Dendritic cell treated with granulocyte-macrophage colony-stimulating factor and Interleukin-4, amounts not matched to agents 40 ng/mL and 50 ng/mL, for 4 days (primary cell): ENCODE measurements at regions of chr16 and their contacts with region 1.

Region 1: GRCh38 chr16:89490387-89491237 is at the start of gene ANKRD11:
- H3K4me3 Mint-ChIP-seq: peak within 1 kb of the TSS; percentile 84
- H3K27ac Mint-ChIP-seq: peak within 1 kb of the TSS; percentile 91
- H3K4me1 Mint-ChIP-seq: peaks cover 77% of the 10 kb centered on the region
- H3K27me3 Mint-ChIP-seq: no peaks in the 10 kb centered on the region

Region 2: DNA sequence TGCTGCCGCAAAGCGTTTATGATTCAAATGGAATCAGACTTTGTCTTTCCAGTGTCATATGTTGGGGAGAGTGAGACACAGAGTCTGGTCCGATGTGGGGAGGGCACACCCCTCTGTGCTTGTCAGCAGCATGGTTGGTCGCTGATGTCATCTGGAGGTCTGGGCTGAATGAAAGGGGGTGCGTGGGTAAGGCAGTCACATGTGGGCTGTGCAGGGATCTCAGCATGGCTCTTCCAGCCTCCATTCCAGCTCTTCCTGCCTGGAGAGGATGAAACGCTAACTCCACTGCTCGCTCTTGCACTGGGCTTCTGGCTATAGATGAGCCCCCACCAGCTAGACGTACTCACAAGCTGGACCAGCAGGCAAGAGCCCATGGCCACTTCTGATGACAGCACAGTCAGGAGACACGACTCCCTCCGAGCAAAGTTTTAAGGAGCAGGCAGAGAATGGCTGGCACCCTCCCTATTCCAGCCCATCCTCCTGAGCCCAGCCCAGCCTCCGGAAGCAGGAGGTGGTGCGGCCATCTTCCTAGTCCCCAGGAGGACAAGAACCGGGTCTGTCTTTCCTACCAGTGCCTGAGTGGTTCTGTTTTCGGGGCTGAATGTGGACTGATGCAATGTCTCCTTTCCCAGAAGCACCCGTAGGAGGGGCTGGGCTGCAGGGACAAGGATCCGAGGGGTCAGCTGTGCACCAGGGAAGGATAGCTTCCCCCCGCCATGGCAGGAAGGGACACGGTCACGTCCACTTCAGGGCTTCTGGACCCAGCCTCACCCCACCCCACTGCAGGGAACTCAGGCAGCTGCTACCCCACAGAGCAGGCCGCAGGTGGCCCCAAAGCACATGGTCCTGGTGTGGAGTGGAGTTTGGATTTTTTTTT is 472.1 kb before region 1 on chr16:
- intact Hi-C with region 1: no loop called
- H3K4me3 Mint-ChIP-seq: no peak overlapping the region
- H3K27ac Mint-ChIP-seq: no peak overlapping the region
- H3K4me1 Mint-ChIP-seq: no peaks in the 10 kb centered on the region
- H3K27me3 Mint-ChIP-seq: peaks cover 47% of the 10 kb centered on the region

Region 3: DNA sequence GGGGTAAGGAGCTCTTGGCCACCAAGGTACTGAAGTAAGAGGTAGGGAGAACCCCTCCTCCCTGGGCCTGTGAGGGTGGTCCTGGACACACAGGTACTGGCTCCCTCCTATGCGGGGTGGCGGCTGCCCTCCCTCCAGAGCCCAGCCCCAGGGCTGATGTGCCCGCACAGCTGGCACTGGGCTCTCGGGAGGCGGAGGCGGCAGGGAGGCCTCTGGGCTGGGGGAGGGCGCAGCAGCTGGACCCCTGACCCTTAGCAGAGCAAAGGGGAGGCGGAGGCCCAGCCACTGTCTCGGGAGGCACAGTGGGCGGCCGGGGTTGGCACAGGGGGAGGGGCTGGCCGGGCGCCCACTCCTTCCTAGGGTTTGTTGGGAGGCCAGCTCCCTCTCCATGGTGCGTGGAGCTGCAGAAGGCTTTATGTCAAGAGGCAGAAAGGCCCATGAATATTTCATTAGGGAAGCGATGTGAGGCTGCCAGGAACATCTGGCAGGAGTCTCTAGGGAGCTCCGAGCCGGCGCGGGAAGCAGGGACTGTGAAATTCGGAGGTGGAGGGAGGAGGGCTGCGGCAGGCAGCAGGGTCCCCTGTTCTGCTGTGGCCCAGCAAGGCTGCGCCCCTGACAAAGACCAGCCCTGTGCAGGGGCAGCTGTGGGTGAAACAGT is 441.0 kb before region 1 on chr16:
- intact Hi-C with region 1: no loop called
- H3K4me3 Mint-ChIP-seq: no peak overlapping the region
- H3K27ac Mint-ChIP-seq: no peak overlapping the region
- H3K4me1 Mint-ChIP-seq: peaks cover 12% of the 10 kb centered on the region
- H3K27me3 Mint-ChIP-seq: peaks cover 34% of the 10 kb centered on the region

Region 4: GRCh38 chr16:89431158-89431584 is 59.4 kb before region 1 on chr16:
- intact Hi-C with region 1: loop called (anchors 10 kb)
- H3K4me3 Mint-ChIP-seq: no peak overlapping the region
- H3K27ac Mint-ChIP-seq: no peak overlapping the region
- H3K4me1 Mint-ChIP-seq: peaks cover 21% of the 10 kb centered on the region
- H3K27me3 Mint-ChIP-seq: no peaks in the 10 kb centered on the region

Region 5: GRCh38 chr16:89453501-89454321 is 36.9 kb before region 1 on chr16:
- intact Hi-C with region 1: loop called (anchors 5 kb)
- H3K4me3 Mint-ChIP-seq: peak overlapping the region; percentile 45
- H3K27ac Mint-ChIP-seq: peak overlapping the region; percentile 79
- H3K4me1 Mint-ChIP-seq: peaks cover 54% of the 10 kb centered on the region
- H3K27me3 Mint-ChIP-seq: no peaks in the 10 kb centered on the region

Region 6: DNA sequence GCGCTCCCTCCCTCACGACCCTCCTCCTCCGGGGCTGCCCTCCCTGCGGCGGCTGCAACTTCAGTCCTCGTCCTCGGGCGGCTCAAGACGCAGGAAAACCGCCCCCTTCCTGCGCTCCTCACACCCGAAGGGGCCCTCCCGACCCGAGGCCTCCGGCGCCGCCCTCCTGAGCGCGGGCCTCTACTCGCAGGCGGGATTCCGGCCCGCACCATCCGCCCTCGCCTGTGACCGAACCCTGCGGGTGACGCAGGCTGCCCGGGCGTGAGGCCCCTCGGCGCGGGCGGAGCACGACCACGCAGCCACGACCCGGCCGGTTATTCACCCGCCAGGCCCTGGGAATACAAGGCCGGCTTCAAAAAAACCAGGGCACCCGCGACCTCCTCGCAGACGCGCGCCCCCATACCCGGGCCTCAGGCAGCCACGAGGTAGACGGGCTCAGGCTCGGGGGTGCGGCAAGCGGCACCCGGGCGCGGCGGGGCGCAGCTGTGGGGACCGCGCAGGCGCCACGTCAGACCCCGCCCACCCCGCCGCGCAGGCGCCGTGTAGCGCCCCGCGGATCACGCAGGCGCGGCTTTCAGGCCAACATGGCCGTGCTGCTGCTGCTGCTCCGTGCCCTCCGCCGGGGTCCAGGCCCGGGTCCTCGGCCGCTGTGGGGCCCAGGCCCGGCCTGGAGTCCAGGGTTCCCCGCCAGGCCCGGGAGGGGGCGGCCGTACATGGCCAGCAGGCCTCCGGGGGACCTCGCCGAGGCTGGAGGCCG is 17.4 kb after region 1 on chr16 and contains the start of gene SPG7:
- intact Hi-C with region 1: loop called (anchors 1 kb)
- H3K4me3 Mint-ChIP-seq: peak within 1 kb of the TSS; percentile 78
- H3K27ac Mint-ChIP-seq: peak within 1 kb of the TSS; percentile 85
- H3K4me1 Mint-ChIP-seq: peaks cover 46% of the 10 kb centered on the region
- H3K27me3 Mint-ChIP-seq: no peaks in the 10 kb centered on the region

Region 7: GRCh38 chr16:89560378-89561141 is 69.9 kb after region 1 on chr16 and contains the start of gene RPL13:
- intact Hi-C with region 1: loop called (anchors 10 kb)
- H3K4me3 Mint-ChIP-seq: peak within 1 kb of the TSS; percentile 91
- H3K27ac Mint-ChIP-seq: peak within 1 kb of the TSS; percentile 99
- H3K4me1 Mint-ChIP-seq: peaks cover 71% of the 10 kb centered on the region
- H3K27me3 Mint-ChIP-seq: no peaks in the 10 kb centered on the region